ENCODE measurements at regions of chr12 and their contacts with region 1.

Region 1: GRCh38 chr12:49322708-49323523 is at the start of gene TROAP:
- DNase-seq: peak; percentile 96
- H3K4me3 Mint-ChIP-seq: peak within 1 kb of the TSS; percentile 97
- H3K27ac Mint-ChIP-seq: peak within 1 kb of the TSS; percentile 81
- H3K4me1 Mint-ChIP-seq: no peaks in the 10 kb centered on the region
- H3K27me3 Mint-ChIP-seq: no peaks in the 10 kb centered on the region
- CTCF ChIP-seq: no peak
- total RNA-seq, gene TROAP: 38.5 and 49.8 TPM in 2 replicates

Region 2: DNA sequence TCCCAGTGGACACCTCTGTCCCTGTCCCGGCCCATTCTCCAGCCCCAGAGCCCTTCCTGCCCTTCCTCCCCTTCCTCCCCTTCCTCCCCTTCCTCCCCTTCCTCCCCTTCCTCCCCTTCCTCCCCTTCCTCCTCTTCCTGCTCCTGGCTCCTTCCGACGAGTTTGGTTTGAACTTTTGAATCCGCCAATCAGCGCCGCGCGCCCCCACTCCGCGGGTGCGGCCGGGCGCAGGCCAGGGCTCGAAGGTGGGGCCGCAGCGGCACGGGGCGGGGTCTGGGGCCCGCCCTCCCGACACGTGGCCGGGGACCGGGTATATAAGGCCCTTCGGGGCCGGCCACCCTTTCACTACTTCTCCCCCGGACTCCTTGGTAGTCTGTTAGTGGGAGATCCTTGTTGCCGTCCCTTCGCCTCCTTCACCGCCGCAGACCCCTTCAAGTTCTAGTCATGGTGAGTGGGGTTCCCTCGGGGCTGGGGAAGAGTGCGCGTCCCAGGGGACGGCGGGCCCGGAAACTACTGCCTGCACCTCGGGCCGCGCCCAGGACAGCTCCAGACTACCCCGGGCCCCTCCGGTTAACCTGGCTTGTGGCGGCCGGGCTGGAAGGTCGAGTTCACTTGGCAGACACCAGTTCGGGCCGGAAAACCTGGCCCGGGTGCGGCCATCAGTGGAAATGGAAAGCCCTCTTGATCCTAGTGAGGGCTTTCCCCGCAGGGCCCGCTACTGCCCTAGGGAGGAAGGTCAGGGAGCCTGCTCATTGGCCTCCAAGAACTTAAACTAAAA is 58.0 kb before region 1 on chr12 and contains the start of gene TUBA1C:
- CTCF ChIA-PET with region 1: interaction called, 13 read pairs
- intact Hi-C with region 1: no loop called
- DNase-seq: peak; percentile 94
- H3K4me3 Mint-ChIP-seq: peak within 1 kb of the TSS; percentile 76
- H3K27ac Mint-ChIP-seq: peak within 1 kb of the TSS; percentile 93
- H3K4me1 Mint-ChIP-seq: peaks cover 5% of the 10 kb centered on the region
- H3K27me3 Mint-ChIP-seq: no peaks in the 10 kb centered on the region
- CTCF ChIP-seq: no peak
- total RNA-seq, gene TUBA1C: 469 and 472 TPM in 2 replicates

Region 3: GRCh38 chr12:49347384-49348237 is 24.7 kb after region 1 on chr12:
- CTCF ChIA-PET with region 1: interaction called, 11 read pairs
- intact Hi-C with region 1: no loop called
- DNase-seq: peak; percentile 89
- H3K4me3 Mint-ChIP-seq: peak overlapping the region; percentile 72
- H3K27ac Mint-ChIP-seq: peak overlapping the region; percentile 69
- H3K4me1 Mint-ChIP-seq: peaks cover 24% of the 10 kb centered on the region
- H3K27me3 Mint-ChIP-seq: peaks cover 43% of the 10 kb centered on the region
- CTCF ChIP-seq: peak; percentile 86

Region 4: DNA sequence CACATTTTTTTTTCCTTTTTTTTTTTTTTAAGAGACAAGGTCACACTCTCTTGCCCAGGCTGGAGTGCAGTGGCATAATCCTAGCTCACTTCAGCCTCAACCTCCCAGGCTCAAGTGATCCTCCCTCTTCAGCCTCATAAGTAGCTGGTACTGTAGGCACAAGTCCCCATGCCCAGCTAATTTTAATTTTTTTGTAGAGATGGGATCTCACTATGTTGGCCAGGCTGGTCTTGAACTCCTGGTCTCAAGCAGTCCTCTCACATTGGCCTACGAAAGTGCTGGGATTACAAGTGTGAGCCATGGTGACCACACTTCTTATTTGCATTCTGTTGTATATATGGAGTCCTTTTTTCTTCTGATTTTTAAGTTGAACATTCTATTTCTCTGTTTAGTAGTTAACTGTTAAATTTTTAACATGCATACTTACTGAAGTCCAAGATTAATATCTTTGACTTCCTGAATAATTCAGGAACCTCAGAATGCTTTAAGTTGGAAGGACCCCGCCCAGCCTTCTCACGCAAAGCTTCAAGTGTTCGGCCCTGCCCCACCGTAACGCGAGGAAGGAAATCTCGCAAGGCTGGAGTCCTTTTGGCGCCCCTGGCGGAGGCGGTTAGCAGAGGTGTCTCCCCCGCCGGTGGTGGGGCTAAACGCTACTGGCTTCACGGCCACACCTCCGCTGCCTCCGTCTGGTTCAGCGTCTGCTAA is 65.9 kb after region 1 on chr12:
- CTCF ChIA-PET with region 1: no interaction called
- intact Hi-C with region 1: no loop called
- DNase-seq: no peak
- H3K4me3 Mint-ChIP-seq: no peak overlapping the region
- H3K27ac Mint-ChIP-seq: no peak overlapping the region
- H3K4me1 Mint-ChIP-seq: no peaks in the 10 kb centered on the region
- H3K27me3 Mint-ChIP-seq: no peaks in the 10 kb centered on the region
- CTCF ChIP-seq: no peak

Measured in Calu3 (cell line).